CD4-positive, alpha-beta T cell (primary cell): ENCODE measurements at regions of chr17 and their contacts with region 1.

Region 1: DNA sequence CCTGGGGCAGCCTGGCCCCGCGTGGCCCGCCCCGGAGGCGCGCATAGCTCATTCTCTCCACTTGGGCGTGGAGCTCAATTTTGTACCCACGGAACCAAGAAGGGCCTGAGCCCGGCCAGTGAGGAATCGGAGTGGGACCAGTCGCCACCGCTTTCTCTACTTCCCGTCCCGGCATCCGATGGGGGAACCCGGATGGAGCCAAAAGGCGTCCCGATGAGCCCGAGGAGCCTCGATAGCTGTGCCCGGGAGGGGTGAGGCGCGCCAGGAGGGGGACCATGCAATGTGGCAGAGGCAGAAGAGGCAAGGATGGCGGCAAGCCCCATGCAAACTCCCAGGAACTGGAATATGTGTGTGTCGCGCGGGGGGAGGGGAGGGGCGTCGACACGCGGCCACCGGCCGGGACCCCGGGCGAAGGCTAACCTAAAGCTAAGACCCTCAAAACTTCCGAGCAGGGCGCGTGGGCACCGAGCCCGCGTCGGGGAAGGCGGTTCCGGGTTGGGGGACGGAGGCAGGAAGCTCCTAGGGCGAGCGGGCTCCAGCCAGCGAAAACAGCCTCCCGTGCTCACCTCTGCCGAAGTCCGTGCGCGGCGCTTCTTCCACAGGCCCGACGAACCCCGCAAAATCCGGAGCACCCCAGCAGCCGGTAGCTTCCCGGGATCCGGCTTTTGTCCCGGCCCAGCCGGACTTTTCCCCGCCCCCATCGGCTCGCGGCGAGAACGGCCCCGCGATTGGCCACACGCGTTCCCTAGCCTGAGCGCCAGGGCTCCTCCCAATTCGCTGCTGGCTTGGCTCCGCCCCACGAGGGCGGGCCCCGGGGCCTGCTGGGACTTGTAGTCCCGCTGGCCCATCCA is at the start of gene ACLY:
- DNase-seq: peak; percentile 87 to 98 (median 94)
- ATAC-seq: peak; percentile 99
- H3K4me3 ChIP-seq: peak within 1 kb of the TSS; percentile 90
- H3K4me3 Mint-ChIP-seq: peak within 1 kb of the TSS; percentile 95
- H3K27ac ChIP-seq: peak within 1 kb of the TSS; percentile 69 to 74
- H3K27ac Mint-ChIP-seq: peak within 1 kb of the TSS; percentile 64
- H3K4me1 ChIP-seq: peaks cover 35% of the 10 kb centered on the region
- H3K4me1 Mint-ChIP-seq: peaks cover 27% of the 10 kb centered on the region
- H3K27me3 ChIP-seq: no peaks in the 10 kb centered on the region
- H3K27me3 Mint-ChIP-seq: no peaks in the 10 kb centered on the region
- CTCF ChIP-seq: no peak
- total RNA-seq, gene ACLY: 25.9 to 28.3 TPM

Region 2: GRCh38 chr17:41322094-41322902 is 596.2 kb before region 1 on chr17:
- CTCF ChIA-PET with region 1: no interaction called
- POLR2A ChIA-PET with region 1: no interaction called
- intact Hi-C with region 1: no loop called
- DNase-seq: peak in 4 of 14 experiments; percentile 33 to 75 (median 70)
- ATAC-seq: peak; percentile 87
- H3K4me3 ChIP-seq: no peak overlapping the region
- H3K4me3 Mint-ChIP-seq: peak overlapping the region; percentile 23
- H3K27ac ChIP-seq: no peak overlapping the region
- H3K27ac Mint-ChIP-seq: peak overlapping the region; percentile 89
- H3K4me1 ChIP-seq: peaks cover 54% of the 10 kb centered on the region
- H3K4me1 Mint-ChIP-seq: peaks cover 59% of the 10 kb centered on the region
- H3K27me3 ChIP-seq: no peaks in the 10 kb centered on the region
- H3K27me3 Mint-ChIP-seq: no peaks in the 10 kb centered on the region
- CTCF ChIP-seq: peak; percentile 88

Region 3: DNA sequence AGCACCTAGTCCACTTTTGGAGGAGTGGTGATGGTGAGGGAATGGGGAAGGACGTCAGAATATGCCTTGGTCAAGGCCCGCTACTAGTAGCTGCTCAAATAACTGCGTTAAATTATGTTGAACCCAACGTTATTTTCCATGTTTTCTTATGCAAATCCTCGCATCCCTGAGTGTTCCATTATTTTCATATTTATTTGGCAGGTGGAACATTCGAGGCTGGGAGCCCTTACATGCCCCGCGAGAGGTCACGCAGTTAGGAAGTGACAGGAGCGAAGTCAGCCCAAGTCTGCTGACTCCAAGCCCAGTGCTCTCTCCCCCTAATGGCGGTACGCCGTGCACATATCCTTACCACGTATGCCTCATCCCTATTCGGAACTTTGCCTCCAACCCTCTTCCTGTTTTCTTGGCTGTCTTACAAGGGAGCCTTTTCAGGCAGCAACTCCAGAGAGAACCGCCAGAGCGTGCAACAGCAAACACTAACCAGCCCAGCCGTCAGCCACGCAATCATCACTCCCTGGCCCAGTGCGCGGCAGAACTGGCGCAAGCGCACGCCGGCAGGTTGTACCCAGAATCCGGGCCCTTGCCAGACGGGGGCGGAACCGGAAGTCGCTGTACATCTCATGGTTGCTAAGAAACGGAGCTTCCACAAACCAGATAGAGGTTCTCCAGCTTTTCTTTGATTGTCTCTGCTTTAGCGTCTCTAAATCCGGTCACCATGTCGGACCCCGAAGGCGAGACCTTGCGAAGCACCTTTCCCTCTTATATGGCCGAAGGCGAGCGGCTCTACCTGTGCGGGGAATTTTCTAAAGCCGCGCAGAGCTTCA is 11.7 kb after region 1 on chr17 and contains the start of gene ODAD4:
- CTCF ChIA-PET with region 1: interaction called, 12 read pairs
- POLR2A ChIA-PET with region 1: interaction called, 44 read pairs
- intact Hi-C with region 1: loop called in 1 of 2 experiments (anchors 1 kb)
- DNase-seq: peak; percentile 93 to 99 (median 95)
- ATAC-seq: peak; percentile 99
- H3K4me3 ChIP-seq: peak within 1 kb of the TSS; percentile 68
- H3K4me3 Mint-ChIP-seq: peak within 1 kb of the TSS; percentile 91
- H3K27ac ChIP-seq: peak within 1 kb of the TSS; percentile 75 to 92
- H3K27ac Mint-ChIP-seq: peak within 1 kb of the TSS; percentile 89
- H3K4me1 ChIP-seq: peaks cover 23% of the 10 kb centered on the region
- H3K4me1 Mint-ChIP-seq: peaks cover 19% of the 10 kb centered on the region
- H3K27me3 ChIP-seq: no peaks in the 10 kb centered on the region
- H3K27me3 Mint-ChIP-seq: no peaks in the 10 kb centered on the region
- CTCF ChIP-seq: peak; percentile 42
- total RNA-seq, gene ODAD4: 2.2 to 2.7 TPM

Region 4: DNA sequence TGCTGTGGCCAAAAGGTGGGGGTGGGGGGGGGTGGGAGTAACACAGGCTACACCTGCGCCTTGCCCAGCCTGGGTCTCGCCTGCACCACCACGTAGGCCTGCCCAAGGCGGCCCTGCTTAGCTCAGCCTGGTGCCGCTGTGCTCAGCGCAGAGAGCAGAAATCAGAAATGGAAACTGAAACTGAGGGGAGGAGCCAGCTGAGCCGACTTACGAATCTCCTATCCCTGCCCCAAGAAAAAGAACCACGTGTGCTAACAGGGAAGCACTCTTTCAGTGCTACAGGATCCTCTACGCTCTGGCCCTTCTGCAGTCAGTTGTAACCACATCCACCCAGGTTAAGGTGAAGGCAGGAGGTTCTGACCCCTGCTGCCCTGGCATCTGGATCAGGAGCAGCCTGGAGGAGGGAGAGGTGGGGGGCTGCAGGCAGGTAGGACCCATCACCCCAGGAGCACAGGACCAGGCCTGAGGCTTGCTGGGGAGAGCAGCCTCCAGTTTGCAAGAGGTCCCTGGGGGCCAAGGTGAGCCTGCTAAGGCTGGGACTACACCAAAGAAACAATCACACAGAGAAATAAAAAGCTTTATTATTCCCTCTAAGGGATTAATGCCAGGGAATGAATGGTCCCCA is 194.1 kb after region 1 on chr17 and contains the start of gene DHX58:
- CTCF ChIA-PET with region 1: no interaction called
- POLR2A ChIA-PET with region 1: no interaction called
- intact Hi-C with region 1: loop called in 1 of 2 experiments (anchors 5 kb)
- DNase-seq: peak; percentile 65 to 93 (median 73)
- ATAC-seq: peak; percentile 79
- H3K4me3 ChIP-seq: peak within 1 kb of the TSS; percentile 58
- H3K4me3 Mint-ChIP-seq: peak within 1 kb of the TSS; percentile 92
- H3K27ac ChIP-seq: peak within 1 kb of the TSS; percentile 66 to 79
- H3K27ac Mint-ChIP-seq: peak within 1 kb of the TSS; percentile 87
- H3K4me1 ChIP-seq: peaks cover 48% of the 10 kb centered on the region
- H3K4me1 Mint-ChIP-seq: peaks cover 50% of the 10 kb centered on the region
- H3K27me3 ChIP-seq: no peaks in the 10 kb centered on the region
- H3K27me3 Mint-ChIP-seq: no peaks in the 10 kb centered on the region
- CTCF ChIP-seq: no peak
- total RNA-seq, gene DHX58: 33.5 to 35.6 TPM

Region 5: GRCh38 chr17:42163113-42163512 is 244.6 kb after region 1 on chr17:
- CTCF ChIA-PET with region 1: no interaction called
- POLR2A ChIA-PET with region 1: no interaction called
- intact Hi-C with region 1: no loop called
- DNase-seq: peak in 3 of 14 experiments; percentile 45 to 48 (median 47)
- ATAC-seq: no peak
- H3K4me3 ChIP-seq: no peak overlapping the region
- H3K4me3 Mint-ChIP-seq: no peak overlapping the region
- H3K27ac ChIP-seq: no peak overlapping the region
- H3K27ac Mint-ChIP-seq: no peak overlapping the region
- H3K4me1 ChIP-seq: no peaks in the 10 kb centered on the region
- H3K4me1 Mint-ChIP-seq: no peaks in the 10 kb centered on the region
- H3K27me3 ChIP-seq: no peaks in the 10 kb centered on the region
- H3K27me3 Mint-ChIP-seq: no peaks in the 10 kb centered on the region
- CTCF ChIP-seq: no peak